ENCODE measurements at regions of chr10 and their contacts with region 1.

Region 1: GRCh38 chr10:119686439-119687191 is 35.4 kb downstream of the BAG3 start:
- DNase-seq: peak; percentile 81
- ATAC-seq: peak; percentile 82 to 90
- H3K4me3 ChIP-seq: no peak overlapping the region
- H3K27ac ChIP-seq: peak overlapping the region in 1 of 2 experiments; percentile 42; a peak in 1 of 6 replicates
- H3K4me1 ChIP-seq: peaks cover 13% of the 10 kb centered on the region
- CTCF ChIP-seq: peak; percentile 92
- EP300 ChIP-seq: no peak
- POLR2A ChIP-seq: no peak
- RAD21 ChIP-seq: peak; percentile 90 to 93

Region 2: DNA sequence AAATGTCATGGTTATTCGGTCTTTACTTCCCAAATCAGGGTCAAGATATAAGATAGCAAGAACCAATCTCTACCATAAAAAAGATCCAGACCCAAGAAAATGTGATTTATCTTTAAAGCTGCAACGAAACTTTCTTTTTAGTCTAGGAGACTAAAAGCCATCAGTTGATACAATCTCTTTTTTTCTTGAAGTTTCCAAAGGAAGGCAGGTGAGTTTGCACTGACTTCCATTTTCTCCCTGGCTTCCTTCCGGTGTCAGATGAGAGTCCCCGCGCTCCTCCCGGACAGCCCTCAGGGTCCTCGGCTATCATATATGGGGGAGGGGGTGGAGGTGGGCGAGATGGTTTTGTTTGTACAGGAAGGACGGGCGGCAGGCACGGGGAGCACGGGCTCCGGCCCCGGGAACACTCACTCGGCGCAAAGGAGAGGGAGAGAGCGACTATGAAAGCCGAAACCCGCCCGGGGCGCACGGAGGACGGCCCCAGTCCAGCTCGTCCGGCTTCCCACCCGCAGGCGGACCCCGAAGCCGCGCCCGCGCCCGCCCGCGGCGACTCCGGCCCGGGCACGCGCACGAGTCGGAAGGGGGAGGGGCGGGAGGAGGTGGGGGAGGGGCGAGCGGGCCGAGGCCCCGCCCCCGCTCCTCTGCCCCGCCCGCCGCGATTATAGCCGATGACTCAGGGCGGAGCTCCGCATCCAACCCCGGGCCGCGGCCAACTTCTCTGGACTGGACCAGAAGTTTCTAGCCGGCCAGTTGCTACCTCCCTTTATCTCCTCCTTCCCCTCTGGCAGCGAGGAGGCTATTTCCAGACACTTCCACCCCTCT is 35.7 kb before region 1 on chr10 and contains the start of gene BAG3:
- CTCF ChIA-PET with region 1: interaction called, 34 read pairs
- POLR2A ChIA-PET with region 1: interaction called, 9 read pairs
- DNase-seq: peak; percentile 80 to 88
- ATAC-seq: peak; percentile 79
- H3K4me3 ChIP-seq: peak within 1 kb of the TSS; percentile 88
- H3K27ac ChIP-seq: peak within 1 kb of the TSS; percentile 89 to 96
- H3K4me1 ChIP-seq: peaks cover 27% of the 10 kb centered on the region
- CTCF ChIP-seq: no peak
- EP300 ChIP-seq: no peak; a peak in 1 of 5 replicates
- POLR2A ChIP-seq: peak; percentile 66
- RAD21 ChIP-seq: no peak; a peak in 1 of 5 replicates
- polyA plus RNA-seq, gene BAG3: 10.7 and 18.3 TPM in 2 replicates

Region 3: DNA sequence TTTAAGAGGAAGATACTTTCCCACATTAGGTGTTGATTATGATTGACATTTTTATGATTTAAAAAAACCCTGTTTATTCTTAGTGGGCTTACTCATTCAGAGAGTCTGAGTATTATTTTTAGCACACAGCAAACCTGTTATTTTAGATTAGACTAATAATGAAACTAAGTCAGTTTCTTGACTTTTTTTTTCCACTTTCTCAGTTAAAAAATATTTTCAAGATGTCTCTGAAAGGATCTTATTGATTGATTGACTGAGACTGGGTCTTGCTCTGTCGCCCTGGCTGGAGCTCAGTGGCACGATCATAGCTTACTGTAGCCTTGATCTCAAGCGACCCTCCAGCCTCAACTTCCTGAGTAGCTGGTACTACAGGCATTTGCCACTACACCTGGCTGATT is 18.8 kb after region 1 on chr10:
- CTCF ChIA-PET with region 1: interaction called, 33 read pairs
- POLR2A ChIA-PET with region 1: no interaction called
- DNase-seq: no peak
- ATAC-seq: no peak
- H3K4me3 ChIP-seq: no peak overlapping the region
- H3K27ac ChIP-seq: no peak overlapping the region
- H3K4me1 ChIP-seq: peaks cover 6% of the 10 kb centered on the region; the same call in 2 of the 3 replicates
- CTCF ChIP-seq: no peak
- EP300 ChIP-seq: no peak
- POLR2A ChIP-seq: no peak
- RAD21 ChIP-seq: no peak

Region 4: GRCh38 chr10:119715628-119716505 is 29.3 kb after region 1 on chr10:
- CTCF ChIA-PET with region 1: interaction called, 25 read pairs
- POLR2A ChIA-PET with region 1: no interaction called
- DNase-seq: no peak
- ATAC-seq: no peak
- H3K4me3 ChIP-seq: no peak overlapping the region
- H3K27ac ChIP-seq: no peak overlapping the region
- H3K4me1 ChIP-seq: no peaks in the 10 kb centered on the region
- CTCF ChIP-seq: no peak
- EP300 ChIP-seq: no peak
- POLR2A ChIP-seq: no peak
- RAD21 ChIP-seq: no peak

Region 5: GRCh38 chr10:119742947-119743648 is 56.5 kb after region 1 on chr10:
- CTCF ChIA-PET with region 1: interaction called, 13 read pairs
- POLR2A ChIA-PET with region 1: no interaction called
- DNase-seq: no peak
- ATAC-seq: peak; percentile 59 to 66; a peak in 3 of 6 replicates
- H3K4me3 ChIP-seq: no peak overlapping the region
- H3K27ac ChIP-seq: no peak overlapping the region
- H3K4me1 ChIP-seq: peaks cover 14% of the 10 kb centered on the region
- CTCF ChIP-seq: no peak
- EP300 ChIP-seq: no peak
- POLR2A ChIP-seq: no peak
- RAD21 ChIP-seq: no peak

Region 6: GRCh38 chr10:120077707-120078492 is 391.3 kb after region 1 on chr10:
- CTCF ChIA-PET with region 1: no interaction called
- POLR2A ChIA-PET with region 1: no interaction called
- DNase-seq: no peak
- ATAC-seq: no peak
- H3K4me3 ChIP-seq: no peak overlapping the region
- H3K27ac ChIP-seq: no peak overlapping the region
- H3K4me1 ChIP-seq: no peaks in the 10 kb centered on the region
- CTCF ChIP-seq: no peak
- EP300 ChIP-seq: no peak
- POLR2A ChIP-seq: no peak
- RAD21 ChIP-seq: no peak